Ascending aorta (tissue), 2 donors: ENCODE measurements at regions of chr2 and their contacts with region 1.

Region 1: DNA sequence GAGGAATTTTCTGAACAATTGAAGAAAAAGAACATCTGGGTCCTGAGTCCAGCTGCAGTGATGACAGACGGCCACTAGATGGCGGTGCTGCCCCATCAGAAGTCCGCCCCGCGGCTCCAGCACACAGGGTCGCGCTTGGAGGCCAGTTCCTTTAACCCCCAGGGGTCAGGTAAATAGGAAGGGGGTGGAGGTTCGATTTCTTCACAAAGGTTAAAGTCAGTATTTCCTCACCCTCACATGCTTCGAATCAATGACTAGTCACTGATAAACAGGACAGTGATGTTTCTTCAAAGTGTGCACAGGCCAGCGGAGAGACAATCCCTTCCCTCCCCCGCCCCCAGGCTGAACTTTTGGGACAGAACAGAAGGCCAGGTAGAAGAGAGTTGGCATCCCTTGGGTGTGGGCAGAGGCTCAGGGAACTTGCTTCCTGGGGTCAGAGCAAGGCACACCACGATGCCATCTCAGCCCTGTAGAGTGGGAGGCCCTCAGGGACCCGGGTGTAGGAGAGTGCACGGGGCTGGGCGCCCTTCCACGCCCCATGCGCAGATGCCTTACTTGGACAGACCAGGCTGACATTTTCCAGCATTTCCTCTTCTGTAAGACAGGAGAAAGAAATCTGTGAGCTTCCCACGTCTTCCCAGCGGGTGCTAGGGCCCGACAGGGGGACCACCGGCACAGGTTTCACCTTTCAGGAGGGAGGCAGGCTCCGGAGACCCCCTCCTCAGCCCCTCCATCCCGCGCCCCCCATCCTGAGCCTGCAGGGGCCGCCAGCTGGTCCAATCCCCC is 722 bp downstream of the APOB start:
- DNase-seq: peak in 1 of 2 donors; percentile 84
- H3K4me3 ChIP-seq: peak overlapping the region in 1 of 2 donors; percentile 61
- H3K27ac ChIP-seq: peak overlapping the region; percentile 72 to 92
- H3K4me1 ChIP-seq: peaks cover 11 to 15% of the 10 kb centered on the region in 2 donors
- H3K27me3 ChIP-seq: no peaks in the 10 kb centered on the region
- CTCF ChIP-seq: peak; percentile 95 to 99 (median 98)

Region 2: DNA sequence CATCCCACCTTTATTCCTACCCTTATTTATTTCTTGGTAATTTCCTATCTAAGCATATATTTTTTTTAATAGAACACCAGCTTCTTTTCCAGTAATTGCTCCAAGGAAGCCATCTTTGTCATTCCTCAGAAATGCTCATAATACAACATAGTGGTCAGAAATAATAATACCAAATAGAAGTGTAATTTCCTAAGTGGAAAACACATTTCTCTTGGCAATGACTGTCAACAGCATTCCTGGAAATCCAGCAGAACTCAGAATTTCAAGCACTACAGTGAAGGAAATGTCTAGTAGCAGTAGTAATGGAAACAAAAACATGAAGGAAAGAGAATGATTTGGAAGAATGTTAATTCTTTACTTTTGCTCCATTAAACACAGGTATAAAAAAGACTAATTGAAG is 319.6 kb before region 1 on chr2:
- intact Hi-C with region 1: loop called (anchors 5 kb)
- DNase-seq: no peak
- H3K4me3 ChIP-seq: no peak overlapping the region
- H3K27ac ChIP-seq: peak overlapping the region; percentile 84 to 87
- H3K4me1 ChIP-seq: peaks cover 9 to 39% of the 10 kb centered on the region in 2 donors
- H3K27me3 ChIP-seq: no peaks in the 10 kb centered on the region
- CTCF ChIP-seq: no peak

Region 3: GRCh38 chr2:20836521-20836920 is 206.6 kb before region 1 on chr2:
- intact Hi-C with region 1: no loop called
- DNase-seq: no peak
- H3K4me3 ChIP-seq: no peak overlapping the region
- H3K27ac ChIP-seq: no peak overlapping the region
- H3K4me1 ChIP-seq: no peaks in the 10 kb centered on the region
- H3K27me3 ChIP-seq: no peaks in the 10 kb centered on the region
- CTCF ChIP-seq: no peak

Region 4: DNA sequence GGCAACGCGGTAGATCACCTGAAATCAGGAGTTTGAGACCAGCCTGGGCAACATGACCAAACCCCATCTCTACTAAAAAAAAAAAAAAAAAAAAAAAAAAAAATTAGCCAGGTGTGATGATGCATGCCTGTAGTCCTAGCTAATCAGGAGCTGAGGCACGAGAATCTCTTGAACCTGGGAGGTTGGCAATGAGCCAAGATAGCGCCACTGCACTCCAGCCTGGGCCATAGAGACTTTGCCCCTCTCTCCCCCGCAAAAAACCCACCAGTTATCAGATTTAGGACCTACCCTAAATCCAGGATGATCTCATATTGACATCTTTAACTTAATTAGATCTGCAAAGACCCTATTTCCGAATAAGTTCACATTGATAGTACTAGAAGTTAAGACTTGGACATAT is 191.0 kb before region 1 on chr2:
- intact Hi-C with region 1: no loop called
- DNase-seq: no peak
- H3K4me3 ChIP-seq: no peak overlapping the region
- H3K27ac ChIP-seq: no peak overlapping the region
- H3K4me1 ChIP-seq: no peaks in the 10 kb centered on the region
- H3K27me3 ChIP-seq: no peaks in the 10 kb centered on the region
- CTCF ChIP-seq: no peak

Region 5: GRCh38 chr2:20962939-20963557 is 80.1 kb before region 1 on chr2:
- intact Hi-C with region 1: loop called (anchors 2 kb)
- DNase-seq: peak in 1 of 2 donors; percentile 80
- H3K4me3 ChIP-seq: no peak overlapping the region
- H3K27ac ChIP-seq: peak overlapping the region in 1 of 2 donors; percentile 69
- H3K4me1 ChIP-seq: peaks cover 8 to 18% of the 10 kb centered on the region in 2 donors
- H3K27me3 ChIP-seq: no peaks in the 10 kb centered on the region
- CTCF ChIP-seq: peak; percentile 72 to 83 (median 83)

Region 6: DNA sequence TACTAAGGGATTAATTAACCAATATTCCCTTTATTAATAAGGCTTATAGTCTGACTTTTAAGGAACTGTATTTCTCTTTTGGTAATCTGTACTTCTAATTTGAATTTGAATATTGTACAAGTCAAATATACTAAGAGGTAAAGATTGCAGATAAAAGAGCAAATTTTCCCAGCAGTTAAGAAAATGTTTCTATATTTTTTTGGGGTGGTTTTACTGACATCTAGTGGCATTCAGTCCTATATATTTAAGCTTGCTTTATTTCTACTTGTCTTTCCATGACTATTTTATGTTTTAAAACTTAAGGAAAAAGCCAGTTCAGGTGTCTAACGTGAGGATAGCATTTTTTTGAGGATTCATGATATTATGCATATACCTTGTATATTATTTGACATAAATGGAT is 122.2 kb after region 1 on chr2:
- intact Hi-C with region 1: loop called (anchors 5 kb)
- DNase-seq: no peak
- H3K4me3 ChIP-seq: no peak overlapping the region
- H3K27ac ChIP-seq: no peak overlapping the region
- H3K4me1 ChIP-seq: no peaks in the 10 kb centered on the region
- H3K27me3 ChIP-seq: no peaks in the 10 kb centered on the region
- CTCF ChIP-seq: peak in 1 of 3 experiments; percentile 17

Region 7: DNA sequence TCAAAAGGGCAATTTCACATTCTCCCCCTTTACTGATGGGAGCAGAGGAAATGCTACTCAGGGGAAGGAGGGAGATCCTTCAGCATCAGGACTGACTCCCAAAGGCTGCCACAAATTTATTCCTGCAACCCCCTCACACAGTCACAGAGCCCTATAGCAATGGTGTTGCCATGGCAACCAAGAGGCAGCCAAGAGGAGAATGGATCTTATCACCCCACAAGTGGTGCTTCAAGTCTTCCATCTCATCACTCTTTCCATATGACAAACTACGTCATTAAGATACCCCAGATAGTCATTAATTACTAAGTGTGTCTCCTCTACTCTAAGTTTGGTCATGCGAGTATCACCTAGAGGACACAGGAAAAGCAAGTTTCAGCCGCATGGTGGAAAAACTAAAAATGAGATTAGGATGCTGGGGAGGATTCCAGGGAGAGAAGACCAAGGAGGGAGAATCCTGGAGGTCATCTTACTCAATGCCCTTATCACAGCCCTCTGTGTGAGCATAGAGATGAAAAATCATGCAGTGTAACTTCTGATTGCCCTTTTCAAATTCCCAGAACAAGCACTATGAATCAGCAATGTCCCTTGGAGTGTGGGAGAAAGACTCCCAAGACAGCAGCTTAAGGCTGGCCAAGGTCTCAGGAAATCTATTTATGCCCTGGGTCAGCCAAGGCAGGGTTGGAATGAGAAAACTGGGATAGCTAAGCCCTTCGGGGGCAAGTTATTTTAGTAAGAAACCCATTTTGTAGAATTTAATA is 1456.1 kb after region 1 on chr2:
- intact Hi-C with region 1: loop called (anchors 10 kb)
- DNase-seq: peak in 1 of 2 donors; percentile 85
- H3K4me3 ChIP-seq: no peak overlapping the region
- H3K27ac ChIP-seq: peak overlapping the region; percentile 31 to 75
- H3K4me1 ChIP-seq: peaks cover 13 to 19% of the 10 kb centered on the region in 2 donors
- H3K27me3 ChIP-seq: no peaks in the 10 kb centered on the region
- CTCF ChIP-seq: no peak